Caco-2 (cell line): ENCODE measurements at regions of chr19 and their contacts with region 1.

Region 1: GRCh38 chr19:45584332-45585157 is at the start of gene OPA3:
- DNase-seq: peak; percentile 99 to 100
- H3K4me3 ChIP-seq: peak within 1 kb of the TSS; percentile 91
- H3K4me3 Mint-ChIP-seq: peak within 1 kb of the TSS; percentile 89
- H3K27ac Mint-ChIP-seq: peak within 1 kb of the TSS; percentile 96
- H3K4me1 ChIP-seq: peaks cover 9% of the 10 kb centered on the region
- H3K4me1 Mint-ChIP-seq: peaks cover 10% of the 10 kb centered on the region
- H3K27me3 ChIP-seq: no peaks in the 10 kb centered on the region
- H3K27me3 Mint-ChIP-seq: peaks cover under 1% of the 10 kb centered on the region
- CTCF ChIP-seq: peak in 1 of 2 experiments; percentile 15
- total RNA-seq, gene OPA3: 16.9 and 17.7 TPM in 2 replicates

Region 2: GRCh38 chr19:45512881-45513483 is 71.6 kb before region 1 on chr19:
- CTCF ChIA-PET with region 1: interaction called, 12 read pairs
- POLR2A ChIA-PET with region 1: no interaction called
- intact Hi-C with region 1: no loop called
- DNase-seq: no peak
- H3K4me3 ChIP-seq: no peak overlapping the region
- H3K4me3 Mint-ChIP-seq: no peak overlapping the region
- H3K27ac Mint-ChIP-seq: no peak overlapping the region
- H3K4me1 ChIP-seq: peaks cover 22% of the 10 kb centered on the region
- H3K4me1 Mint-ChIP-seq: peaks cover 23% of the 10 kb centered on the region
- H3K27me3 ChIP-seq: no peaks in the 10 kb centered on the region
- H3K27me3 Mint-ChIP-seq: no peaks in the 10 kb centered on the region
- CTCF ChIP-seq: no peak

Region 3: DNA sequence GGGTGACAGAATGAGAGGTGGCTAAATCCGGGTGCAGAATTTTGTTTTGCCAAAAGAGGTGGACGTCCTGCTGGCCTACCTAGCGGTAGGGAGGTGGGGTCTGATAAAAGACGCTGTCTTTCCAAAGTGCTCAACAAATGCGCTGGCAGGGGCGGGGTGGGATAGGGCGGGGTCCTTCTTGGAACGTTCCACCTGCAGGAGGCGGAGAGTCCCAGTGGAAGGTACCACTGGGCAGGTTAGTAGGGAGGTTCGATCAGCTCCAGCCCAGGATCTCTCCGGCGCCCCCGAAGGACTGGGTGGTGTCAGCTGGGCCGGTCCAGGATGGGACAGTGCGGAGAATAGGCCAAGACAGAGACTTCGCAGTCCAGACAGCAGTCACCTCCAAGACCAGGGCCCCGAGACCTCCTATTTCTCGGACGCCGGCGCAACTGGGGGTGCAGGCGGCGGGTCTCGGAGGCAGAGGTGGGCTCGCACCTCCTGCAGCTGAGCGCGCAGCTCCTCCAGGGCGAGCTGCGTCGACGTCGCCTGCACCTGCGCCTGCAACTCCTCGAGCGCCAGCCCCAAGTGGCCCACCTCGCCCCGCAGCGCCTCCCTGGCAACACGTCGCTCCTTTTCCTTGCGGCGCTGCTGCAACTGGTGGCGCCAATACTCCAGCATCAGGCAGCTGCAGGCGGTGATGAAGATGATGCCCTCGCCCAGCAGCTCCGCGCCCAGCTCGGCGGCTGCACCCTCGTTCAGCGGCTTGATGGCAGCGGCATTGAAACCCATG is 55.7 kb before region 1 on chr19:
- CTCF ChIA-PET with region 1: interaction called, 7 read pairs
- POLR2A ChIA-PET with region 1: interaction called, 10 read pairs
- intact Hi-C with region 1: no loop called
- DNase-seq: peak; percentile 88 to 92
- H3K4me3 ChIP-seq: peak overlapping the region; percentile 63
- H3K4me3 Mint-ChIP-seq: peak overlapping the region; percentile 85
- H3K27ac Mint-ChIP-seq: peak overlapping the region; percentile 55
- H3K4me1 ChIP-seq: 0 out of 2 replicates have a peak, but pooled peaks cover 8% of the 10 kb centered on the region
- H3K4me1 Mint-ChIP-seq: peaks cover 10% of the 10 kb centered on the region
- H3K27me3 ChIP-seq: no peaks in the 10 kb centered on the region
- H3K27me3 Mint-ChIP-seq: no peaks in the 10 kb centered on the region
- CTCF ChIP-seq: peak in 1 of 2 experiments; percentile 24

Region 4: GRCh38 chr19:45558399-45558878 is 26.1 kb before region 1 on chr19:
- CTCF ChIA-PET with region 1: interaction called, 15 read pairs
- POLR2A ChIA-PET with region 1: no interaction called
- intact Hi-C with region 1: no loop called
- DNase-seq: peak; percentile 61 to 70
- H3K4me3 ChIP-seq: no peak overlapping the region
- H3K4me3 Mint-ChIP-seq: no peak overlapping the region
- H3K27ac Mint-ChIP-seq: no peak overlapping the region
- H3K4me1 ChIP-seq: no peaks in the 10 kb centered on the region
- H3K4me1 Mint-ChIP-seq: peaks cover 14% of the 10 kb centered on the region
- H3K27me3 ChIP-seq: no peaks in the 10 kb centered on the region
- H3K27me3 Mint-ChIP-seq: no peaks in the 10 kb centered on the region
- CTCF ChIP-seq: peak; percentile 63 to 80

Region 5: GRCh38 chr19:45621389-45621788 is 36.8 kb after region 1 on chr19:
- CTCF ChIA-PET with region 1: no interaction called
- POLR2A ChIA-PET with region 1: no interaction called
- intact Hi-C with region 1: no loop called
- DNase-seq: no peak
- H3K4me3 ChIP-seq: no peak overlapping the region
- H3K4me3 Mint-ChIP-seq: no peak overlapping the region
- H3K27ac Mint-ChIP-seq: no peak overlapping the region
- H3K4me1 ChIP-seq: no peaks in the 10 kb centered on the region
- H3K4me1 Mint-ChIP-seq: no peaks in the 10 kb centered on the region
- H3K27me3 ChIP-seq: no peaks in the 10 kb centered on the region
- H3K27me3 Mint-ChIP-seq: no peaks in the 10 kb centered on the region
- CTCF ChIP-seq: no peak

Region 6: GRCh38 chr19:45681391-45682015 is 97.0 kb after region 1 on chr19:
- CTCF ChIA-PET with region 1: interaction called, 9 read pairs
- POLR2A ChIA-PET with region 1: interaction called, 11 read pairs
- intact Hi-C with region 1: no loop called
- DNase-seq: peak; percentile 88 to 93
- H3K4me3 ChIP-seq: peak overlapping the region; percentile 40
- H3K4me3 Mint-ChIP-seq: peak overlapping the region; percentile 76
- H3K27ac Mint-ChIP-seq: peak overlapping the region; percentile 81
- H3K4me1 ChIP-seq: peaks cover 15% of the 10 kb centered on the region
- H3K4me1 Mint-ChIP-seq: peaks cover 12% of the 10 kb centered on the region
- H3K27me3 ChIP-seq: no peaks in the 10 kb centered on the region
- H3K27me3 Mint-ChIP-seq: no peaks in the 10 kb centered on the region
- CTCF ChIP-seq: peak; percentile 96 to 97

Region 7: GRCh38 chr19:45692187-45693105 is 107.9 kb after region 1 on chr19 and contains the start of gene QPCTL:
- CTCF ChIA-PET with region 1: interaction called, 4 read pairs
- POLR2A ChIA-PET with region 1: interaction called, 8 read pairs
- intact Hi-C with region 1: loop called (anchors 2 kb)
- DNase-seq: peak; percentile 98 to 99
- H3K4me3 ChIP-seq: peak within 1 kb of the TSS; percentile 95
- H3K4me3 Mint-ChIP-seq: peak within 1 kb of the TSS; percentile 83
- H3K27ac Mint-ChIP-seq: peak within 1 kb of the TSS; percentile 93
- H3K4me1 ChIP-seq: peaks cover 4% of the 10 kb centered on the region; the same call in 1 of the 2 replicates
- H3K4me1 Mint-ChIP-seq: no peaks in the 10 kb centered on the region
- H3K27me3 ChIP-seq: no peaks in the 10 kb centered on the region
- H3K27me3 Mint-ChIP-seq: no peaks in the 10 kb centered on the region
- CTCF ChIP-seq: no peak
- total RNA-seq, gene QPCTL: 16.9 and 20.2 TPM in 2 replicates

Region 8: DNA sequence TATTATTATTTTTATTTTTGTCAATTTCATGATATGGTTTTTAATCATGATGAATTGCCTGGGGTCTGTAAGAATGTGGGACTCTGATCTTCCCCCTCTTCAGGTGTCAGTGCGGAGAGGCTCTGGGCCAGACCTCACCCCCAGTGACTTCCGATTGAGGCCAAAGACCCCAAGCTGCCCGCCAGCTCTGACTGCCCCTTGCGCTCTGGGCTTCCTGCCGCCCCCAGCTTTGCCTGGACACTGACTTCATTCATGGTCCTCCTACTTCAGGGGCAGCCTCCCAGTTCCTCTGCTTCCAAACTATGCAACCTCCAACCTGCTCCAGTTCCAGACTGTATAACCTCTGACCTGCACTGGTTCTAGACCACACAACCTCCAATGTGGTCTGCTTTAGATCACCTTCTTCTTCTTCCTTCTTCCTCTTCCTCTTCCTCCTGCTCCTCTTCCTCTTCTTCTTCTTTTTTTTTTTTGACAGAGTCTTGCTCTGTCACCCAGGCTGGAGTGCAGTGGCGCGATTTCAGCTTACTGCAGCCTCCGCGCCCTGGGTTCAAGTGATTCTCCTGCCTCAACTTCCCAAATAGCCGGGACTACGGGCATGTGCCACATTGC is 755.6 kb after region 1 on chr19:
- CTCF ChIA-PET with region 1: no interaction called
- POLR2A ChIA-PET with region 1: no interaction called
- intact Hi-C with region 1: loop called (anchors 5 kb)
- DNase-seq: no peak
- H3K4me3 ChIP-seq: no peak overlapping the region
- H3K4me3 Mint-ChIP-seq: no peak overlapping the region
- H3K27ac Mint-ChIP-seq: no peak overlapping the region
- H3K4me1 ChIP-seq: no peaks in the 10 kb centered on the region
- H3K4me1 Mint-ChIP-seq: no peaks in the 10 kb centered on the region
- H3K27me3 ChIP-seq: no peaks in the 10 kb centered on the region
- H3K27me3 Mint-ChIP-seq: peaks cover 3% of the 10 kb centered on the region
- CTCF ChIP-seq: no peak